ENCODE measurements at regions of chr2 and their contacts with region 1.

Region 1: GRCh38 chr2:11477994-11478393 is 12.0 kb upstream of the E2F6 start:
- DNase-seq: peak; percentile 87 to 96 (median 88)
- H3K4me3 ChIP-seq: no peak overlapping the region
- H3K27ac ChIP-seq: no peak overlapping the region
- H3K4me1 ChIP-seq: peaks cover 0 to under 1% (median 0%) of the 10 kb centered on the region in 3 donors
- H3K27me3 ChIP-seq: no peaks in the 10 kb centered on the region
- CTCF ChIP-seq: peak; percentile 92

Region 2: GRCh38 chr2:11583840-11584524 is 106.0 kb after region 1 on chr2:
- intact Hi-C with region 1: loop called (anchors 5 kb)
- DNase-seq: peak; percentile 71 to 82 (median 79)
- H3K4me3 ChIP-seq: no peak overlapping the region
- H3K27ac ChIP-seq: no peak overlapping the region
- H3K4me1 ChIP-seq: no peaks in the 10 kb centered on the region
- H3K27me3 ChIP-seq: no peaks in the 10 kb centered on the region
- CTCF ChIP-seq: peak; percentile 72

Region 3: GRCh38 chr2:11784747-11785610 is 307.0 kb after region 1 on chr2:
- intact Hi-C with region 1: loop called (anchors 10 kb)
- DNase-seq: peak in 4 of 5 donors; percentile 63 to 80 (median 79)
- H3K4me3 ChIP-seq: peak overlapping the region; percentile 34 to 51 (median 39)
- H3K27ac ChIP-seq: no peak overlapping the region
- H3K4me1 ChIP-seq: no peaks in the 10 kb centered on the region
- H3K27me3 ChIP-seq: no peaks in the 10 kb centered on the region
- CTCF ChIP-seq: peak; percentile 74

Measured in kidney (tissue), 22 donors.